Dorsolateral prefrontal cortex (tissue), 120 donors: ENCODE measurements at regions of chr2 and their contacts with region 1.

Region 1: GRCh38 chr2:88082781-88083180 is 15.2 kb downstream of the SMYD1 start:
- DNase-seq: peak in 1 of 10 donors; percentile 23
- H3K4me3 ChIP-seq: peak overlapping the region in 9 of 59 donors; percentile 7 to 30 (median 15)
- H3K27ac ChIP-seq: peak overlapping the region; percentile 53 to 100 (median 95)
- H3K27me3 ChIP-seq: no peaks in the 10 kb centered on the region
- CTCF ChIP-seq: peak in 3 of 56 donors; percentile 4 to 33 (median 9)

Region 2: DNA sequence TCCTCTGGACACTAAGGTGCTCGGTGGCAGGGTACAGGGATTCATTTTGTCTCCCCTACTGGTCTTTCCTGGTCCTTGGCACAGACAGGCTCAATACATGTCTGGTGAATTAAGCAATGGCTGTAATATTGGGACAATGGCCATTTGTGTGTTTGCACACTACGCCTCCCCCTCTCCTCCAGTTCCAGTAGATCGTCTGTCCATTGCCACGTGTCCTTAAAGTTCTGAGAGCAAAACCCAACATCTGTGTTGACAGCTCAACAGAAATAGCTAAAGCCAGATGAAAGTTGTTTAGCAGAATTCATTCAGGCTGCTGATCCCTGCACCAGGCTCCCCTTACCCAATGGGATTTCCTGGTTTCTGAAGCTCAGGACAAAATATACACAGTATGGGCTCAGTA is 54.0 kb after region 1 on chr2:
- intact Hi-C with region 1: loop called in 1 of 2 experiments (anchors 5 kb)
- DNase-seq: peak in 3 of 10 donors; percentile 24 to 64 (median 61)
- H3K4me3 ChIP-seq: no peak overlapping the region
- H3K27ac ChIP-seq: peak overlapping the region in 56 of 59 donors; percentile 15 to 91 (median 75)
- H3K27me3 ChIP-seq: peaks cover 0 to 2% (median 0%) of the 10 kb centered on the region in 45 donors
- CTCF ChIP-seq: peak in 9 of 56 donors; percentile 8 to 30 (median 14)

Region 3: GRCh38 chr2:88600038-88600465 is 517.3 kb after region 1 on chr2:
- intact Hi-C with region 1: no loop called
- DNase-seq: peak in 3 of 10 donors; percentile 4 to 15 (median 5)
- H3K4me3 ChIP-seq: peak overlapping the region in 2 of 59 donors; percentile 2 to 7
- H3K27ac ChIP-seq: peak overlapping the region in 30 of 59 donors; percentile 2 to 67 (median 32)
- H3K27me3 ChIP-seq: no peaks in the 10 kb centered on the region
- CTCF ChIP-seq: no peak